HCT116 (cell line): ENCODE measurements at regions of chr9 and their contacts with region 1.

Region 1: DNA sequence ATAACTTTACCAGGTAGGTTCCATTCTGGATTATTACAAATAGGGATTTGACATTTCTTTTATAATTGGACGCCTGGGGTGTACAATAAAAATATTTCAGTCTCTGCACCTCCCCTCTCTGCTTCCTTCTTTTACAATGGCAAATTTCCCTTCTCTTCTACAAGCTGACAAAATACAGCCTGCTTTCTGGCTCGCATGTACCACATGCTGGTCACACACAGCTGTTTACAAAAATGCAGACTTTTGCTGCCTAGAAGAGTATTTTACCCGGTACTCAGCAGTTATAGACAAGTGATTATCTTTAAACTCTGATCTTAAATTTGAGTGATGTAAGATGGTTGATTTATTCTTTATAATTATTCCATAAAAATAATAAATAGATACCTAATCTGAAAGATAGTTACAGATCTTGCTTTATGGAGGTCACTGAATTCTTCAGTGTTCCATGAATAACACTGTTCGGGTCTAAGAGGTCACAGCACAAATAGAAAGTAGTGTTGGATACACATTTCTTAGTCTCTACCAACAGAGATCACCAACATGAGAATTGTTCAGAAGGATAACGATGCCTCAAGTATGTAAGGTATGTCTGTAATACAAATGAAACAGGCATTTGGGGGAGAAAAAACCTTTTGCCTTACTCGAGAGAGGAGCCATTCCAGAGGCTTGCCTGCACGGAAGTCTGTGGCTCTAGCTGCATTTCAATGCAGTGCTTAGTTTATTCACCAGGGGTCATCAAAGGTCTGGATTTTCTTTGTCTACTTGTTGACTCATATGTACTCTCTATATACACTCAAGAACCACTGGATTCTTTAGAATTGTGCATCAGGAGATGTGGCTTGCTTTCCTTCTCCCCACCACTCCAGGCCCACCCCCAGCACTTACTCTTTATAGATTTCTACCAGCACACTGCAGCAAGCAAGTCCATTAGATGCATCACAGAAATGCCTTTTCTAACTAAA is 206.6 kb upstream of the RFX3 start:
- DNase-seq: peak; percentile 73
- ATAC-seq: peak; percentile 99
- H3K4me3 ChIP-seq: no peak overlapping the region
- H3K27ac ChIP-seq: no peak overlapping the region
- H3K4me1 ChIP-seq: peaks cover 0 to 7% of the 10 kb centered on the region in 2 experiments; a peak in 2 of 4 replicates
- H3K27me3 ChIP-seq: no peaks in the 10 kb centered on the region
- CTCF ChIP-seq: peak; percentile 68 to 85 (median 78)
- POLR2A ChIP-seq: no peak
- RAD21 ChIP-seq: peak; percentile 92

Region 2: DNA sequence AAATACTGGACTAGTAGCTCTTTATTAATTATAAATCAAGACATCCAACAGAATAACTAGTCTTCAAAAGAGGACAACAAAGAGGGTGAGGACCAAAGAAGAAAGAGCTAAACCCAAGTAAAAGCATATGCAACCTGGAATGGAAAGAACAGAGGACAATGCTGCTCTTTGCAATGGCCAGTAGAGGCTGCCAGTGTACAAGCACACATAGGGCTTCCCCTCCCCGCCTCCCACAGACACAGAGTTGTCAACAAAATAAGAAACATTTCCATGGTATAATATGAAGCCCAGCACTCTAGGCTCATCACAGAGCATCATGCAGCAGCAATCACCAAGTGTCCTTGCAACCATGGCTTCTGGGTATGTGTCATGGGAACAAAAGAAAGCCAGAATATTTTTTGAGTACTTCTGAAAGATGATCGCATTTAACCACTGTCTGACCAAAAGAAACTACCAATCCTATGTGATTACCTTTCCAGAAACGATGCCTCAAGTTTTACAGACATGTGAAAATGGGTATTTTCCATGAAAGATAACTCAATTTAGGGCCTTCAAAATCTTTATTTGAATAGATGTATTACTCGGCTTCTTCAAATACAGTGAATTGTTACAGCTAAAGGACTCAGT is 264.7 kb before region 1 on chr9:
- CTCF ChIA-PET with region 1: no interaction called
- POLR2A ChIA-PET with region 1: no interaction called
- RAD21 ChIA-PET with region 1: no interaction called
- intact Hi-C with region 1: loop called (anchors 5 kb)
- DNase-seq: peak; percentile 38
- ATAC-seq: peak; percentile 98
- H3K4me3 ChIP-seq: no peak overlapping the region
- H3K27ac ChIP-seq: no peak overlapping the region
- H3K4me1 ChIP-seq: no peaks in the 10 kb centered on the region
- H3K27me3 ChIP-seq: no peaks in the 10 kb centered on the region
- CTCF ChIP-seq: peak; percentile 47 to 90 (median 89); a peak in 5 of 6 replicates
- POLR2A ChIP-seq: no peak
- RAD21 ChIP-seq: peak; percentile 85

Region 3: GRCh38 chr9:3608011-3608410 is 124.3 kb before region 1 on chr9:
- CTCF ChIA-PET with region 1: no interaction called
- POLR2A ChIA-PET with region 1: no interaction called
- RAD21 ChIA-PET with region 1: no interaction called
- intact Hi-C with region 1: no loop called
- DNase-seq: no peak
- ATAC-seq: no peak
- H3K4me3 ChIP-seq: no peak overlapping the region
- H3K27ac ChIP-seq: no peak overlapping the region
- H3K4me1 ChIP-seq: no peaks in the 10 kb centered on the region
- H3K27me3 ChIP-seq: no peaks in the 10 kb centered on the region
- CTCF ChIP-seq: no peak
- POLR2A ChIP-seq: no peak
- RAD21 ChIP-seq: no peak

Region 4: DNA sequence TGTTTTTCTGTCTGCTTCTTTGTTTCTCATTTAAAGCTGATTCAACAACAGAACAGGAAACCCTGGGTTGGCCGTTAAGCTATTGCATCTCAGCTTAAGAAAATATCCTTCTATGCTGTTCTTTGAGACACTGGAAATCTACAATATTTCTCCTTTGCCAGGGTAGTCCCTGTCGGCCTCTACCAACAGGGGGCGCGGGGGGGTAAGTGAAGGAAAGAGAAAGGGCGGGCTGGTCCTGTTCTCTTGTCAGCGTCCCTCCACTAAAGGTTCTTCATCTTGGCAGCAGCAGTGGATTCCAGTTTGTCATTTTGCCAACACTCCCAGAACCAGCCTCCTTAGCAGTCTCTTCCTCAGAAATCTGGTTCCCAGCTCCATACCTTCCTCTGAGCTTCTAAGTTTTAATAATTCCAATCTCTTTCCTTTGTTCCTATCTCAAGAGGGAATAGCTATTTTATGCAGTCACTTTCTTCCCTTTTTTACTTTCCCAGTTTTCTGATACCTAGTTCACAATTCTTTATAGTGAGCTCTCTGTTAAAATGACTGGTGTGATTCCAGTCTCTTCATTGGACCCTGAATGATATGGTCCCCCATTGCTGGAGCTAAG is 345.2 kb after region 1 on chr9:
- CTCF ChIA-PET with region 1: interaction called, 6 read pairs
- POLR2A ChIA-PET with region 1: no interaction called
- RAD21 ChIA-PET with region 1: interaction called in 1 of 2 experiments, 3 read pairs
- intact Hi-C with region 1: loop called (anchors 2 kb)
- DNase-seq: peak; percentile 48
- ATAC-seq: peak; percentile 89
- H3K4me3 ChIP-seq: no peak overlapping the region
- H3K27ac ChIP-seq: no peak overlapping the region
- H3K4me1 ChIP-seq: peaks cover 0 to 8% of the 10 kb centered on the region in 2 experiments; a peak in 2 of 4 replicates
- H3K27me3 ChIP-seq: no peaks in the 10 kb centered on the region
- CTCF ChIP-seq: peak; percentile 78 to 93 (median 93)
- POLR2A ChIP-seq: no peak
- RAD21 ChIP-seq: peak; percentile 77

Region 5: GRCh38 chr9:4315582-4316215 is 583.3 kb after region 1 on chr9:
- CTCF ChIA-PET with region 1: interaction called, 4 read pairs
- POLR2A ChIA-PET with region 1: no interaction called
- RAD21 ChIA-PET with region 1: no interaction called
- intact Hi-C with region 1: loop called (anchors 5 kb)
- DNase-seq: peak; percentile 71
- ATAC-seq: peak; percentile 100
- H3K4me3 ChIP-seq: no peak overlapping the region
- H3K27ac ChIP-seq: no peak overlapping the region
- H3K4me1 ChIP-seq: no peaks in the 10 kb centered on the region
- H3K27me3 ChIP-seq: no peaks in the 10 kb centered on the region
- CTCF ChIP-seq: peak; percentile 71 to 95 (median 79); a peak in 5 of 6 replicates
- POLR2A ChIP-seq: no peak
- RAD21 ChIP-seq: peak; percentile 91

Region 6: DNA sequence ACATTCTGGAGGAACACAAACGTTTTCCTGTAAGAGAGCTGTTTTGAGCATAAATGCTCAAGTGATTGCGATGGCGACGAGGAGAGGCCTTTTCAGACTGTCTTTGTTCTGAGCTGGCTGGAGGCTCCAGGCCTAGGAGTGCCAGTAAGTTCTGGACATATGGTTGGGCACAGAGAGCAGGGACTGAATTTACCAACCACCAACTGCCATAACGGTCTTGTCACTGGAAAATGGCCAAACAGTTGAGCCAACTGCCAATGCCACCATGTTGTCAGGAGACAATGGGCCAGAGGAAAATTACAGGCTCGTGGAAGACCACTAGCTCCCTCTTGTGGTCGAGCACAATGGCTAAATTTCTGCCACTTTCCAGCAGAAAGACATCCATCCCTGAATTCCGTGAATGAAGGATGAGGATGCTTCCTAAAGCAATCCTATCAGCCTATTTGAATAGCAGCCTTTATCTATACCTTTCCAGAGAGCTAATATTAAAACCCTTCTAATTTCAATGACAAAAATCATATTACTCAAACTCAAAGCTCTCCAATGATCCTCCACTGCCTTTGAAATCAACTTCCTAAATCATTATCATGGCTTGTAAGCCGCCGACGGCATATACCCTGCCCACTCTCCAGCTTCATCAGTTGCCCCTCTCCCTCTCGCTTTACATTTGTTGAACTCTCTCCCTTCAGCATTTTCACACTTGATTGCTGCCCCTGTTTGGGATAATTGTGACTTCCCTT is 634.4 kb after region 1 on chr9:
- CTCF ChIA-PET with region 1: interaction called, 10 read pairs
- POLR2A ChIA-PET with region 1: no interaction called
- RAD21 ChIA-PET with region 1: no interaction called
- intact Hi-C with region 1: loop called (anchors 1 kb)
- DNase-seq: peak; percentile 32
- ATAC-seq: peak; percentile 73
- H3K4me3 ChIP-seq: no peak overlapping the region
- H3K27ac ChIP-seq: no peak overlapping the region
- H3K4me1 ChIP-seq: no peaks in the 10 kb centered on the region
- H3K27me3 ChIP-seq: no peaks in the 10 kb centered on the region
- CTCF ChIP-seq: peak; percentile 80 to 91 (median 84)
- POLR2A ChIP-seq: no peak
- RAD21 ChIP-seq: peak; percentile 88